Mammary epithelial cell (primary cell): ENCODE measurements at regions of chr19 and their contacts with region 1.

Region 1: GRCh38 chr19:4723367-4724187 is at the start of gene DPP9:
- DNase-seq: peak; percentile 98
- H3K4me3 ChIP-seq: peak within 1 kb of the TSS; percentile 73 to 96 (median 90)
- H3K27ac ChIP-seq: peak within 1 kb of the TSS; percentile 35
- H3K4me1 ChIP-seq: peaks cover 25% of the 10 kb centered on the region
- H3K27me3 ChIP-seq: no peaks in the 10 kb centered on the region
- CTCF ChIP-seq: peak in 1 of 2 donors; percentile 52
- total RNA-seq, gene DPP9: 156 to 242 TPM

Region 2: GRCh38 chr19:4576016-4576933 is 147.3 kb before region 1 on chr19:
- CTCF ChIA-PET with region 1: no interaction called
- dilution Hi-C with region 1: no loop called
- in situ Hi-C with region 1: no loop called
- intact Hi-C with region 1: loop called (anchors 5 kb)
- DNase-seq: no peak
- H3K4me3 ChIP-seq: no peak overlapping the region
- H3K27ac ChIP-seq: no peak overlapping the region
- H3K4me1 ChIP-seq: peaks cover 11% of the 10 kb centered on the region
- H3K27me3 ChIP-seq: peaks cover 9% of the 10 kb centered on the region
- CTCF ChIP-seq: peak; percentile 51 to 79

Region 3: GRCh38 chr19:4669723-4670480 is 53.7 kb before region 1 on chr19 and contains the start of gene MYDGF:
- CTCF ChIA-PET with region 1: no interaction called
- dilution Hi-C with region 1: no loop called
- in situ Hi-C with region 1: no loop called
- intact Hi-C with region 1: loop called (anchors 1 kb)
- DNase-seq: peak; percentile 81
- H3K4me3 ChIP-seq: peak within 1 kb of the TSS; percentile 71 to 97 (median 85)
- H3K27ac ChIP-seq: peak within 1 kb of the TSS; percentile 59
- H3K4me1 ChIP-seq: peaks cover 14% of the 10 kb centered on the region
- H3K27me3 ChIP-seq: no peaks in the 10 kb centered on the region
- CTCF ChIP-seq: no peak
- total RNA-seq, gene MYDGF: 57.7 to 105 TPM

Region 4: GRCh38 chr19:4694209-4694987 is 29.2 kb before region 1 on chr19:
- CTCF ChIA-PET with region 1: interaction called, 4 read pairs
- dilution Hi-C with region 1: no loop called
- in situ Hi-C with region 1: no loop called
- intact Hi-C with region 1: loop called (anchors 1 kb)
- DNase-seq: peak; percentile 100
- H3K4me3 ChIP-seq: no peak overlapping the region
- H3K27ac ChIP-seq: peak overlapping the region; percentile 86
- H3K4me1 ChIP-seq: peaks cover 44% of the 10 kb centered on the region
- H3K27me3 ChIP-seq: no peaks in the 10 kb centered on the region
- CTCF ChIP-seq: no peak

Region 5: DNA sequence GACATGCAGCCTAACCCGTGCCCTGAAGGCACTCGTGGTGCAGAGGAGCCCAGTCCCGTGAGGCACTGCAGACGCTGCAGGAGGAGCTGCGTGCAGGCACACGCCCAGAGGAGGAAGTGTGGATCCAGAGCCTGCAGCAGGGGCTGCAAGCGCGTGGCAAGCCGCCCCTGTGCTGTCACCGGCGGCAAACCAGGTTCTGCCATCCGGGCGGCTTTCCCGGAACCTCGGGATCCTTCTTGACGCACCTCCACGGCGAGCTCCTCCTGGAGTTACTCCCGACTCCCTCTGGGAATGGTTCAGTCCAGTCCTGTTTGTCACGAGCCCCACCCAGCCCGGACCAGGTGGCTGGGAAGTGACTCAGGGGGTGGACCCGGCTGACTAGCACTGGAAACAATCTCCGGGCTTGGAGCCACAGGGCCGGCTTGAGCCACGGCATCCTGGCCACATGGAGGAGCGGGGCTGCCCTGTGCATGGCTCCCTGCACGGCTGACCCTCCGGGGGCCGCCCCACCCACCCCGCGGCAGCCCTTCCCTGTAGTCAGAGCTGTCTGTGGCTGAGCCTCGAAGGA is 10.1 kb before region 1 on chr19:
- CTCF ChIA-PET with region 1: no interaction called
- dilution Hi-C with region 1: no loop called
- in situ Hi-C with region 1: no loop called
- intact Hi-C with region 1: loop called (anchors 1 kb)
- DNase-seq: peak; percentile 99
- H3K4me3 ChIP-seq: no peak overlapping the region
- H3K27ac ChIP-seq: peak overlapping the region; percentile 52
- H3K4me1 ChIP-seq: peaks cover 70% of the 10 kb centered on the region
- H3K27me3 ChIP-seq: no peaks in the 10 kb centered on the region
- CTCF ChIP-seq: no peak

Region 6: DNA sequence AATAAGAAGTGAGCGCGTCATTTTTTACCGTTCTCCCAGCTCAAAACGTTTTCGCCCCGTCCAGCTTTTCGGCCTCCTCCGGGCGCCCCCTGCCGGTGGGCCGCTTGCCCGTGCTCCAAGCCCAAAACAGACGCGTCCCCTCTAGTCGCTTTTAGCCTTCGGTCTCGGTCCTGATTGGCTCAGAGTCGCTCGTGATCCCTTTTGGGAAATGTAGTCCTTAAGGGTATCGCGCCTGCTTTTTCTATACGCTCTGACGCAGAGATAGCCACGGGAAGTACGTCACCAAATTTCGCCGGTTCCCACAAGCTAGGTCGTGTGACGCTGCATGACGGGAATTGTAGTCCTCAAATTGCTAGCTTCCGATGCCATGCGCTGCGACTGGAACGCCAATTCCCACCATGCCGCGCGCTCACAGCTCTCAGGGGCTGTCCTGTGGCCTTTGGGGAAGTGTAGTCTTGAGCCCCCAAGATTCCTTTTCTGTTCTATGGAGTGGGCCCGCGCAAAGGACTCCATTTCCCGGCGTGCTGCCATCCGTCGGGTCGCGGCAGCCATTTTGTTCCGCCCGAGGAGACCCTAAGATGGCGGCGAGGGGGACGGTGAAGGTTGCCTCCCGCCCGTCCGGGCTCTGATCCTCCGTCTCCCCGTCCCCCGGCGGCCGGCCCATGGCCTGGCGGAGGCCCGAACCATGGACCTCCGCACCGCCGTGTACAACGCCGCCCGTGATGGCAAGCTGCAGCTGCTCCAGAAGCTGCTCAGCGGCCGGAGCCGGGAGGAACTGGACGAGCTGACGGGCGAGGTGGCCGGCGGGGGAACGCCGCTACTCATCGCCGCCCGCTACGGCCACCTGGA is 67.8 kb after region 1 on chr19 and contains the start of gene FEM1A:
- CTCF ChIA-PET with region 1: interaction called, 28 read pairs
- dilution Hi-C with region 1: no loop called
- in situ Hi-C with region 1: no loop called
- intact Hi-C with region 1: loop called (anchors 2 kb)
- DNase-seq: peak; percentile 100
- H3K4me3 ChIP-seq: peak within 1 kb of the TSS; percentile 68 to 89 (median 77)
- H3K27ac ChIP-seq: peak within 1 kb of the TSS; percentile 78
- H3K4me1 ChIP-seq: peaks cover 39% of the 10 kb centered on the region
- H3K27me3 ChIP-seq: no peaks in the 10 kb centered on the region
- CTCF ChIP-seq: peak; percentile 98 to 99
- total RNA-seq, gene FEM1A: 12.8 to 17.5 TPM

Region 7: DNA sequence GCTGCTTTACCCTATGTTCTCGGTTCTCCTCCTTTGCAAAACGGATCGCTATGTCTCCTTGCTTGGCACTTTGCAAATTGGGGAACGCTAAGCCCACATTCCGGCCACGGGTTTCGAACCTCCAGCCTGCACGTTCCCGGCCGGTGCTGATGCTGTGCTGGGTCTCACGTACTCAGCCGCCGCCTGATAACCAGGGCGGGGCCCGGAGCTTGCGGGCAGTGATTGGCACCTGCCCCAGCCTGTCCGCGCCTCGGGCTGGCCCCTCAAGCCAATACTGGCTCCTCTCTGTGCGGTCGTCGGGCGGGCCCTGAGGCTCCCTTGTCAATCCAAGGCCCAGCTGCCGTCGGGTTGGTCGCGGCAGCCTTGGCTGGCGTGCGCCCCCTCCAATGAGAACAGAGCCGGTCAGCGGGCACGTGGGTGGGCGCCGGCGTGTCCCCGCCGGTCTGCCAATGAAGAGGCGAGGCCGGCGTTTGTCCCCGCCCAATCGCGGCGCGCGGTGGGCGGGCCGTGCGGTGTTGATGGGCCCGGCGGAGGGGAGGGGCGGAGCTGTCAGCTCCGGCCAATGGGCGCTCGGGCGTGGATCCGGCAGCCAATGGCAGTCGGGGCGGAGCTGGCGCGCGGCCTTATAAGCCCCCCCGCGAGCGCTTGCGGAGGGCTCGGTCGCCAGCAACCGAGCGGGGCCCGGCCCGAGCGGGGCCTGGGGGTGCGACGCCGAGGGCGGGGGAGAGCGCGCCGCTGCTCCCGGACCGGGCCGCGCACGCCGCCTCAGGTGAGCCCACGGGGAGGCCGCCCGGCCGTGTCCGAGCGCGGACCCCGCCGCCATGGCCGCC is 245.1 kb after region 1 on chr19 and contains the start of gene KDM4B:
- CTCF ChIA-PET with region 1: no interaction called
- dilution Hi-C with region 1: no loop called
- in situ Hi-C with region 1: no loop called
- intact Hi-C with region 1: loop called (anchors 5 kb)
- DNase-seq: peak; percentile 100
- H3K4me3 ChIP-seq: peak within 1 kb of the TSS; percentile 67 to 84 (median 68)
- H3K27ac ChIP-seq: peak within 1 kb of the TSS; percentile 58
- H3K4me1 ChIP-seq: peaks cover 28% of the 10 kb centered on the region
- H3K27me3 ChIP-seq: no peaks in the 10 kb centered on the region
- CTCF ChIP-seq: no peak
- total RNA-seq, gene KDM4B: 20.3 to 33.5 TPM